Ascending aorta (tissue), 2 donors: ENCODE measurements at regions of chr18 and their contacts with region 1.

Region 1: GRCh38 chr18:40738321-40738880 is 1216.6 kb upstream of the PIK3C3 start:
- DNase-seq: no peak
- H3K4me3 ChIP-seq: no peak overlapping the region
- H3K27ac ChIP-seq: no peak overlapping the region
- H3K4me1 ChIP-seq: no peaks in the 10 kb centered on the region
- H3K27me3 ChIP-seq: no peaks in the 10 kb centered on the region
- CTCF ChIP-seq: no peak

Region 2: DNA sequence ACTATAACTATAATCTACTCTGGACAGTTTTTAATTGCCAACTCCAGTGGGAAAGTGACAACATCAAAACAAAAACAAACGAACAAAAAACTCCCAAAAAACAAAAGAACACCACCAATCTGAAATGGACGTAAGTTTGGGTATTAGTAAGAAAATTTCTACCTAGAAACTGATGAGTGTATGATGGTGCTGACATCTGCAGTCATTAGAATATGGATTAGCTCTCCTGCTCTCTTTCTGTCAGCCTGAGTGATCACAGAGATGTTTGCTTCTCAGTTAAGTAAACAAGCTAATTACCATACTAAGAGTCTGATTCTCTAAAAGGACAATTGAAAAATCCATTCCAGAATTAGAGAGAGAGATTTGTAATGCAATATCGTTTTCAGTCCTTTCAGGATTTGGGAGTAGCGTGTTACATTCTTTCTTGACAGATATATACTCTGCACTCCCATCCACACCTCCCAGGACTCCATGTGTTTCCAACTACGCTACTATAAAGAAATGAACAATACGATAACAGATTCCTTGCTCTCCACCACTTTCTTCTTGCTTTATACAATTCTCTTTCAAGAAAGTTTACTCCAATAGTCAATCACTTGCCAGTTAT is 130.8 kb before region 1 on chr18:
- intact Hi-C with region 1: no loop called
- DNase-seq: no peak
- H3K4me3 ChIP-seq: no peak overlapping the region
- H3K27ac ChIP-seq: no peak overlapping the region
- H3K4me1 ChIP-seq: no peaks in the 10 kb centered on the region
- H3K27me3 ChIP-seq: no peaks in the 10 kb centered on the region
- CTCF ChIP-seq: no peak

Region 3: GRCh38 chr18:40789286-40789685 is 50.9 kb after region 1 on chr18:
- intact Hi-C with region 1: loop called (anchors 10 kb)
- DNase-seq: no peak
- H3K4me3 ChIP-seq: no peak overlapping the region
- H3K27ac ChIP-seq: no peak overlapping the region
- H3K4me1 ChIP-seq: no peaks in the 10 kb centered on the region
- H3K27me3 ChIP-seq: no peaks in the 10 kb centered on the region
- CTCF ChIP-seq: no peak